ENCODE measurements at regions of chr2 and their contacts with region 1.

Region 1: DNA sequence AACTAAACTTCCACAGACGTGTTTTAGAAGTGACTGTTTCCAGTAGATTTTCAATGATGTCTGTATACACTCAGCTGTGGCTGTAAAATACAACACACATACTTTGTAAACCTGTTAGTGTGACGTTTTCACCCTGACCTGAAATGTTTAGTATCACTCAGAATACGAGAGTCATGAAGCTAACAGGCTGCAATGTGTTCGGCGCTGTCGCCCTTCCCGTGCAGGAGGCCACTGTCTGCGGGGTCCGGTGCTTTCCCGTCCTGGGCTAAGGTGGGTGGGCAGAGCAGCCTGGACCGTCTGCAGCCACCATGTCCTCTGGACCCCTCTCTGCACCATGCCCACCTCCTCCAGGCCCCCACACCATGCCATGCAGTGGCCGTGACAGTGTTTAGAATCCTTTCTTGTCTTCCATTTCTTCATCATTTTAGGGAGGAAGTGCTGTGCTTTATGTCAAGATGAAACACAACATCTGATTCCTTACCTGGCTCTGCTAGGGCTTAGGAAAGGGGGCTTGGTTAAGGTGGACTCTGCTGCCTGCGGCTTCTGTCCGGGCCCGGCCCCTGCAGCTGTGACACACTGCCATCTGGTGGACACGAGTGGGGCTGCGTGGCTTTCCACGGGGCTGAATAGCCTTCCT is 53.8 kb upstream of the RBM44 start:
- DNase-seq: peak; percentile 54
- ATAC-seq: peak; percentile 93
- H3K4me3 ChIP-seq: no peak overlapping the region
- H3K27ac ChIP-seq: no peak overlapping the region
- H3K4me1 ChIP-seq: peaks cover 14% of the 10 kb centered on the region
- H3K27me3 ChIP-seq: no peaks in the 10 kb centered on the region
- CTCF ChIP-seq: peak; percentile 96
- POLR2A ChIP-seq: peak; percentile 59
- RAD21 ChIP-seq: peak; percentile 99

Region 2: GRCh38 chr2:237092920-237093781 is 651.6 kb before region 1 on chr2:
- CTCF ChIA-PET with region 1: no interaction called
- POLR2A ChIA-PET with region 1: no interaction called
- dilution Hi-C with region 1: no loop called
- in situ Hi-C with region 1: no loop called
- intact Hi-C with region 1: loop called (anchors 10 kb)
- DNase-seq: peak; percentile 85
- ATAC-seq: peak; percentile 72
- H3K4me3 ChIP-seq: no peak overlapping the region
- H3K27ac ChIP-seq: peak overlapping the region; percentile 75; the same call in 1 of the 2 replicates
- H3K4me1 ChIP-seq: peaks cover 20% of the 10 kb centered on the region
- H3K27me3 ChIP-seq: no peaks in the 10 kb centered on the region
- CTCF ChIP-seq: peak; percentile 84
- POLR2A ChIP-seq: no peak
- RAD21 ChIP-seq: peak; percentile 87

Region 3: GRCh38 chr2:237512774-237513466 is 231.8 kb before region 1 on chr2:
- CTCF ChIA-PET with region 1: no interaction called
- POLR2A ChIA-PET with region 1: no interaction called
- dilution Hi-C with region 1: no loop called
- in situ Hi-C with region 1: loop called (anchors 10 kb)
- intact Hi-C with region 1: loop called (anchors 1 kb)
- DNase-seq: peak; percentile 85
- ATAC-seq: peak; percentile 91
- H3K4me3 ChIP-seq: no peak overlapping the region
- H3K27ac ChIP-seq: no peak overlapping the region
- H3K4me1 ChIP-seq: peaks cover 18% of the 10 kb centered on the region; the same call in 1 of the 2 replicates
- H3K27me3 ChIP-seq: no peaks in the 10 kb centered on the region
- CTCF ChIP-seq: peak; percentile 98
- POLR2A ChIP-seq: no peak
- RAD21 ChIP-seq: peak; percentile 89

Region 4: DNA sequence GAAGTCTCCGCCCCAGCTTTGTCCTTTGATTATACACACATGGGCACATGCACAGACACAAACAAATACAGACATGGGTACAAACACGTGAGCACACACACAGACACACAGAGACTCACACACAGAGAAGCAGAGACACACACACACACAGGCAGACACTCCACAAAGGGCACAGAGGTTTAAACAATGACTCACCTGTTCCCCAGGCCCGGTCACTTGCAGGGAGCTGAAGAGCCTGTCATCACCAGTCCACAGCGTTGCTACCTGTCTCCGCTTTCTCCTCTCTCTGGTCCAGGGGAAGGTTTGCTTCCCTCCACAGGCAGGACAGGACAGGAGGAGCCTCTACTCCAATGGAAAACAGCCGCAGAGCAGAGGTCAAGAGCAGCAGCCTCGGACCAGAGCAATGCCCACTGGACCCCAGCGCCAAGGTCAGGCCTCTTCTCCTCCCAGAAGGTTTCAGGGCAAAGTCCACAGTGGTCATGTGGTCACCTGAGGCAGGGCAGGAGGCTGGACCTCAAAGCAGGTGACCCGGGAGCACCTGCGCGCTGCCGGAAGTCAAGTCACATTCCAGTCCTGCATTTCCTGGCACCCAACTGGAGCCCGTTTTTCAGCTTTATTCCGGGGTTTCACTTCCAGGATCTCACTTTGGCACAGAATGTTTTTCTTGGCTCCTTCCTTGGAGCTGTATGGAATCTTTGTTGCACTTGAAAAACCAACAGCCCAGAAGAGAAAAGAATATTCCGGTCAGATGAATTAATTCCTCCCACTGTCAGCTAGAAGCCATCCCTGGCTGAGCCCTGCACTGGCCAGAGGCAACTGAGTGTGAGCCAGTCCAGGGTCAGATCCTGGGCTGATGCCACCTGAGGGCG is 154.2 kb before region 1 on chr2 and contains the start of gene RAB17:
- CTCF ChIA-PET with region 1: interaction called, 7 read pairs
- POLR2A ChIA-PET with region 1: no interaction called
- dilution Hi-C with region 1: no loop called
- in situ Hi-C with region 1: loop called (anchors 5 kb)
- intact Hi-C with region 1: no loop called
- DNase-seq: peak; percentile 39
- ATAC-seq: no peak
- H3K4me3 ChIP-seq: no peak within 1 kb of the TSS
- H3K27ac ChIP-seq: no peak within 1 kb of the TSS
- H3K4me1 ChIP-seq: peaks cover 6% of the 10 kb centered on the region
- H3K27me3 ChIP-seq: no peaks in the 10 kb centered on the region
- CTCF ChIP-seq: no peak
- POLR2A ChIP-seq: no peak
- RAD21 ChIP-seq: no peak
- total RNA-seq, gene RAB17: not detected in 2 replicates

Region 5: GRCh38 chr2:237627441-237628246 is 117.1 kb before region 1 on chr2 and contains the start of gene LRRFIP1:
- CTCF ChIA-PET with region 1: no interaction called
- POLR2A ChIA-PET with region 1: no interaction called
- dilution Hi-C with region 1: no loop called
- in situ Hi-C with region 1: no loop called
- intact Hi-C with region 1: loop called (anchors 1 kb)
- DNase-seq: no peak
- ATAC-seq: peak; percentile 97
- H3K4me3 ChIP-seq: peak within 1 kb of the TSS; percentile 90
- H3K27ac ChIP-seq: peak within 1 kb of the TSS; percentile 49; the same call in 1 of the 2 replicates
- H3K4me1 ChIP-seq: peaks cover 7% of the 10 kb centered on the region
- H3K27me3 ChIP-seq: no peaks in the 10 kb centered on the region
- CTCF ChIP-seq: 0 out of 2 replicates have a peak, but pooled peaks have one; percentile 19
- POLR2A ChIP-seq: peak; percentile 31; the same call in 1 of the 2 replicates
- RAD21 ChIP-seq: 0 out of 2 replicates have a peak, but pooled peaks have one; percentile 5
- total RNA-seq, gene LRRFIP1: 52.2 and 63.0 TPM in 2 replicates

Region 6: DNA sequence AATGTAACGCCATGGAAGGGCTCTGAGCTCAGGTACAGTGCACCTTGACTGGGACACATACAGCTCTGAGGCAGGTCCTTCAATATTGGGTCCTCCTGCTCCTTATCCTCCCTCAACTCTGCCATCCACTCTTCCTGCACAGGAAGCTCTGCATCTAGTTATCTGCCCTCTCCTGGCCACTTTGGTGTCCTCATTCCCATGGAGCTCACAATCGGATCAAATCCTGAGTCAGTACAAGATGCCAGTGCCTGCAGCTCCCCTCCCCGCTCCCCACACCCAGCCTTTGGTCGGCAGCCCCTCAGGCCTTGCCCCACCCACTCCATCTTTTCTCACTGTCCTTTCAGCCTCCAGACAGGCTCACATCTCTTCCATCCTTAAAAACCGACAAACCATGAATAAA is 59.3 kb before region 1 on chr2:
- CTCF ChIA-PET with region 1: interaction called, 6 read pairs
- POLR2A ChIA-PET with region 1: no interaction called
- dilution Hi-C with region 1: no loop called
- in situ Hi-C with region 1: no loop called
- intact Hi-C with region 1: loop called (anchors 5 kb)
- DNase-seq: no peak
- ATAC-seq: no peak
- H3K4me3 ChIP-seq: no peak overlapping the region
- H3K27ac ChIP-seq: no peak overlapping the region
- H3K4me1 ChIP-seq: peaks cover 14% of the 10 kb centered on the region
- H3K27me3 ChIP-seq: no peaks in the 10 kb centered on the region
- CTCF ChIP-seq: peak; percentile 48
- POLR2A ChIP-seq: no peak
- RAD21 ChIP-seq: peak; percentile 36

Measured in IMR-90 (cell line).